Ascending aorta (tissue), 2 donors: ENCODE measurements at regions of chr15 and their contacts with region 1.

Region 1: DNA sequence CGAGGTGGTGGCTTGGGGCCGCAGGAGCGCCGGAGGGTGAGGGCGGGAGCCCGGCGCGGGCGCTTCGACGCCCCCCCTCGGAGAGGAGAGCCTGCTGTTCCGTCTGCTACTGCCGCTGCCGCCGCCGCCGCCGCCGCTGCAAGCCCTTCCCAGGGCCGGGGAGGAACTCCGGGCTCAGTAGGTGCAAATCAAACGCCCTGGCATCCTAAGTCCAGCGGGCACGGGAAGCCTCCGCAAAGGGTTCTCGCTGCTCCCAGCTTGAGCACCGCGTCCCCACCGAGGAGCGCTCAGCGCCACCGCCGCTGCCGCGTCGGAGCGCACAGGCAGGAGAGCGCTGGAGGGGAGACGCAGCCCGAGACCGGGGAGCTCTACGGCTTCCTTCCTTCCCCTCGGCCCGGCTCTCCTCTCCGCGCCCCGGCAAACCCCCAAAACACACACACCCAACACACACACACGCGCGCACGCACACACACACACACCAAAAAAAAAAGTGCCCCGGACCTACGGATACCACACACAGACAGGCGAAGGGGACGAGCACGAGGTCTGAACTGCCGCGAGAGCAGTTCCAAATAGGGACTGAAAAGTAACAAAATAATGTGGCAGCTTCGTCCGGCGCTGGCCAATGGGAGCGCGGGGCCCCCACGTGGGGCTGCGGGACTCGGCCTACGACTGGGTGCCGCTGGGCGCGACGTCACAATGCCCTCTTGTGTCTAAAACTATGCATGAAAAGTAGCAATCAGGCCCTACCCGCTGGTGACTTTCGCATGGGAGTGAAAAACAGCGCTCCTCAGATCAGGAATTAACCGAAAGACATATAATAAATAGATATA is at the start of gene TLE3:
- DNase-seq: peak; percentile 99 to 100
- H3K4me3 ChIP-seq: peak within 1 kb of the TSS; percentile 85 to 89
- H3K27ac ChIP-seq: peak within 1 kb of the TSS; percentile 92 to 94
- H3K4me1 ChIP-seq: peaks cover 11 to 41% of the 10 kb centered on the region in 2 donors
- H3K27me3 ChIP-seq: no peaks in the 10 kb centered on the region
- CTCF ChIP-seq: peak; percentile 36 to 48 (median 45)
- total RNA-seq, gene TLE3: 76.4 TPM

Region 2: DNA sequence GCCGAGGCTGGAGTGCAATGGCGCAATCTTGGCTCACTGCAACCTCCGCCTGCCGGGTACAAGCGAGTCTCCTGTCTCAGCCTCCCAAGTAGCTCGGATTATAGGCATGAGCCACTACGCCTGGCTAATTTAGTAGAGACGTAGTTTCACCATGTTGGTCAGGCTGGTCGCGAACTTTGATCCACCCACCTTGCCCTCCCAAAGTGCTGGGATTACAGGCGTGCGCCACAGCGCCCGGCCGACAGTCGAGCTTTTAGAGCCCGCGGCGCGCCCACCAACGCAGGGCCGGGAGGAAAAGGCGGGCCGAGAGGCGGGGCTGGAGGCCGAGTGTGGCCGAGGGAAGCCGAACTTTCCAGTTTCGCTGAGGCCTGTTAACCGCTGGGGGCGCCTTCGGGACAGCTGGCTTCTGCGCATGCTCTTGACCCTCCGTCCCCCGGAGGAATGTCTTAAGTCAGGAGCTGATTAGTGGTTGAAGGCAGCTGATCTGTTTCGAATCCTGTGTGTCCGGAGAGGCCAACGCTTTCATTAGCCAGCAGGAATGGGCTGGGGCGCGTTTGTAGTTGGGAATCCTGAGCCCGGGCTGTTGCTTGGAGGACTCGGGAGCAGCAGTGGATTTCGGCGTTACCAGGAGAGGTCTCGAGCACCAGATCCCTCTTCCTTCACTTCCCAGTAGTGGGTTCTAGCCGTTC is 634.9 kb before region 1 on chr15:
- intact Hi-C with region 1: loop called (anchors 5 kb)
- DNase-seq: peak; percentile 87 to 98
- H3K4me3 ChIP-seq: peak overlapping the region; percentile 66 to 67
- H3K27ac ChIP-seq: peak overlapping the region; percentile 81 to 86
- H3K4me1 ChIP-seq: peaks cover 0 to 11% of the 10 kb centered on the region in 2 donors
- H3K27me3 ChIP-seq: no peaks in the 10 kb centered on the region
- CTCF ChIP-seq: peak; percentile 83 to 89 (median 88)

Region 3: GRCh38 chr15:69593981-69594966 is 503.3 kb before region 1 on chr15:
- intact Hi-C with region 1: loop called (anchors 2 kb)
- DNase-seq: peak; percentile 58 to 89
- H3K4me3 ChIP-seq: peak overlapping the region; percentile 18 to 43
- H3K27ac ChIP-seq: peak overlapping the region; percentile 87 to 91
- H3K4me1 ChIP-seq: peaks cover 18 to 38% of the 10 kb centered on the region in 2 donors
- H3K27me3 ChIP-seq: no peaks in the 10 kb centered on the region
- CTCF ChIP-seq: no peak

Region 4: DNA sequence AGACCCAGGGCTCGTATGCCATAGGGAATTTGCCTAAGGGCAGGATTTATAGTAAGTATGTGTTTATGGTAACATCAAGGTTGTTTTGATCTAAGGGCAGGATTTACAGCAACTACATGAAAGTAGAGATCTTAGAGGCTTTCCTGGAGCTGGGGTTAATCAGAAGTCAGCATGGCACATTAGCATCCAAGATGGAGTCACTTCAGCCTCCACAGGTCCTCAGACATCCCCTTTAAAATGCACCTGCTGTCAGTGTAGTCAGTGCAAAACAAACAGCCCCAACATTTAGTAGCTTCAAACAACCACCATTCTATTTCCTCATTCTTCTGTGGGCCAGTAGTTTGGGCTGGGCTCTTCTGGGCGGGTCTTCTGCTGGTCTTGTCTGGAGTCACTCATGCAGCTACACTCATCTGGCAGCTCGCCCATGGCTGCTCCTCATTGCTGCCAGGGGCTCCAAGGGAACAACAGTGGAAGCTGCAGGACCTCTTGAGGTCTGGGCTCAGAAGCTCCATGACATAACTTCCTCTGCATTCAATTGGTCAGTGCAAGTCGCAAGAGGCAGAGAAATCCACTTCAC is 99.8 kb before region 1 on chr15:
- intact Hi-C with region 1: no loop called
- DNase-seq: peak in 1 of 2 donors; percentile 66
- H3K4me3 ChIP-seq: no peak overlapping the region
- H3K27ac ChIP-seq: no peak overlapping the region
- H3K4me1 ChIP-seq: no peaks in the 10 kb centered on the region
- H3K27me3 ChIP-seq: no peaks in the 10 kb centered on the region
- CTCF ChIP-seq: no peak

Region 5: GRCh38 chr15:70023064-70023768 is 74.3 kb before region 1 on chr15:
- intact Hi-C with region 1: loop called (anchors 2 kb)
- DNase-seq: no peak
- H3K4me3 ChIP-seq: no peak overlapping the region
- H3K27ac ChIP-seq: peak overlapping the region; percentile 47 to 73
- H3K4me1 ChIP-seq: peaks cover 4 to 26% of the 10 kb centered on the region in 2 donors
- H3K27me3 ChIP-seq: no peaks in the 10 kb centered on the region
- CTCF ChIP-seq: no peak

Region 6: GRCh38 chr15:70182857-70183695 is 85.5 kb after region 1 on chr15:
- intact Hi-C with region 1: loop called (anchors 5 kb)
- DNase-seq: no peak
- H3K4me3 ChIP-seq: no peak overlapping the region
- H3K27ac ChIP-seq: no peak overlapping the region
- H3K4me1 ChIP-seq: peaks cover 0 to 7% of the 10 kb centered on the region in 2 donors
- H3K27me3 ChIP-seq: no peaks in the 10 kb centered on the region
- CTCF ChIP-seq: no peak

Region 7: DNA sequence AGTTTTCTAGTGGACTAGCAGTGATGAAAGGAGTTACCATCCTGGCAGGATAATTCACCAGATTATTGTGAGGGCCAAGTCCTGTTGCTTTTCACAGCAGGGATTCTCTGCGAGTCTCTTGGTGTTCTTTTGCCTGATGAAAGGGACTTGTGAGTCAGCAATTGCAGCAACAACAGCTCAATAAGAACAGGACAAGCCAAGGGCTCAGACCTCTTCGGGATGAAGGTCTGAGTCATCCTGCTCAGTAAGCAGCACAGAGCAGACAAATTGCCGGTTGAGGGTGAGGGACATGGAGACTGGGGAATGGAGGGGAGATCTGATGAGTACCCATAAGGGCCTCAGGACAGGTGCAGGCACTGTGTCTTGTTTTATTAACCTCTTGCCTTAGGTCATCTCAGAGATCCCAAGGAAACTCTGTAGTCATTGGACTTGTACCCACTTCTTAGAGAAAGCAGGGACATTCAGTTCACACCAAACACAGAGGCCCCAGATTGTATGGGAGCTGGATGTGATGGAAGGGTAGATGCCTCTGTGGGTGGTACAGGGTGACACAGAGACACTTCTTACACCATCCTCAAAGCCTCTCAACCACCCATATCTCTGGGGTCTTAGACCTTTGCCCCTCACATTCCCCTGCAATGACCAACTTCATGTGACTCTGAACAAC is 174.0 kb after region 1 on chr15:
- intact Hi-C with region 1: loop called (anchors 5 kb)
- DNase-seq: peak; percentile 33 to 90
- H3K4me3 ChIP-seq: no peak overlapping the region
- H3K27ac ChIP-seq: peak overlapping the region; percentile 35 to 78
- H3K4me1 ChIP-seq: peaks cover 7 to 27% of the 10 kb centered on the region in 2 donors
- H3K27me3 ChIP-seq: no peaks in the 10 kb centered on the region
- CTCF ChIP-seq: no peak

Region 8: GRCh38 chr15:70474471-70475396 is 377.2 kb after region 1 on chr15:
- intact Hi-C with region 1: loop called (anchors 2 kb)
- DNase-seq: peak; percentile 79 to 97
- H3K4me3 ChIP-seq: peak overlapping the region; percentile 16 to 48
- H3K27ac ChIP-seq: peak overlapping the region; percentile 91
- H3K4me1 ChIP-seq: peaks cover 11 to 16% of the 10 kb centered on the region in 2 donors
- H3K27me3 ChIP-seq: no peaks in the 10 kb centered on the region
- CTCF ChIP-seq: no peak